Calu3 (cell line): ENCODE measurements at regions of chr2 and their contacts with region 1.

Region 1: DNA sequence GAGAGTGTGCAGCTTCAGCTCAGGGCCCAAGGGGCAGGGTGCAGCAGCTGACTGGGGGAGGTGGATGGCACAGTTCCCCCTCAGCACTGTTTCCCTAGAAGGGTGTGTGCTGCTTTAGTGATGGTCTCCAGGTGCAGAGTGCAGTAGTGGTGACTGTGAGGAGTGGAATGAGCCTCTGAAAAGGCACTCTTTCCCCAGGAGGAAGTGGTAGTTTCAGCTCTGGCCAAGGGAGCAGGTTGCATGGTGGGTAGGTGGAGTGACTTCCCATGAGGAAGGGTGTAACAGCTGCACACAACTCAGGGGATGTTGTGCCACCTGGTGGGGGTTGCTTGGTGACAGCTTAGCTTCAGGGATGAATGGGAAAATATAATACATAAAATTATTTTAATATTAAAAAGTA is 251.5 kb upstream of the NXPH2 start:
- DNase-seq: peak; percentile 63
- H3K4me3 Mint-ChIP-seq: no peak overlapping the region
- H3K27ac Mint-ChIP-seq: no peak overlapping the region
- H3K4me1 Mint-ChIP-seq: peaks cover 7% of the 10 kb centered on the region
- H3K27me3 Mint-ChIP-seq: no peaks in the 10 kb centered on the region
- CTCF ChIP-seq: no peak

Region 2: GRCh38 chr2:138846223-138846821 is 185.4 kb before region 1 on chr2:
- CTCF ChIA-PET with region 1: interaction called, 7 read pairs
- intact Hi-C with region 1: loop called (anchors 5 kb)
- DNase-seq: peak; percentile 6
- H3K4me3 Mint-ChIP-seq: no peak overlapping the region
- H3K27ac Mint-ChIP-seq: no peak overlapping the region
- H3K4me1 Mint-ChIP-seq: no peaks in the 10 kb centered on the region
- H3K27me3 Mint-ChIP-seq: no peaks in the 10 kb centered on the region
- CTCF ChIP-seq: peak; percentile 55

Region 3: DNA sequence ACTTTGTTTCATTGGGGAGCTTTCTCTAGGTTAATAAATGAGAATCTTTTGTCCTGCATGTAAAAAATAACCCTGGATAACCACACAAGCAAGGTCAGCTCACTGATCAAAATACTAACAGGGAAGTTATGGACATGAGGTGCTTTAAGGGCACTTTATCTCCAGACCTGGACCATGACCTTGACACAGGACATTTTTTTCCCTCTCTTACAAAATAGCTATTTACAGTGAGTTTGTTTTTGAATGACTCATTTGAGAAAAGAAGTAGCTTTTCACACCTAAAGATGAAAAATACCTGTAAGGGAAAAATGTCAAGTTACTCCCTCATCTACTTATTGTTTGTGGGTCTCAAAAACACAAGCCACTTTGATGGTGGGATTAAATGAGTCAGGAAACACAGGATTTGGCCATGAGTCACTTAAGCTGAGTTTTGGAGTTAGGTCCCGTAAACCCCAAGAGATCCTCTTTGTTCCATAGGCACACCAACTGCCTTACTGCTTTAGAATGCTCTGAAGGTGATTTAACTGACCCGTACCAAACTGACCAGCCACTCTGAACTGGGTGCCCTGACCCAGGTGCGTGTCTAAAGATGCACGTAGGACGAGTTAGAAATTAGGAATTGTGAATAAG is 227.8 kb after region 1 on chr2:
- CTCF ChIA-PET with region 1: no interaction called
- intact Hi-C with region 1: no loop called
- DNase-seq: no peak
- H3K4me3 Mint-ChIP-seq: no peak overlapping the region
- H3K27ac Mint-ChIP-seq: no peak overlapping the region
- H3K4me1 Mint-ChIP-seq: no peaks in the 10 kb centered on the region
- H3K27me3 Mint-ChIP-seq: no peaks in the 10 kb centered on the region
- CTCF ChIP-seq: no peak